Gastrocnemius medialis (tissue), 4 donors: ENCODE measurements at regions of chr1 and their contacts with region 1.

Region 1: DNA sequence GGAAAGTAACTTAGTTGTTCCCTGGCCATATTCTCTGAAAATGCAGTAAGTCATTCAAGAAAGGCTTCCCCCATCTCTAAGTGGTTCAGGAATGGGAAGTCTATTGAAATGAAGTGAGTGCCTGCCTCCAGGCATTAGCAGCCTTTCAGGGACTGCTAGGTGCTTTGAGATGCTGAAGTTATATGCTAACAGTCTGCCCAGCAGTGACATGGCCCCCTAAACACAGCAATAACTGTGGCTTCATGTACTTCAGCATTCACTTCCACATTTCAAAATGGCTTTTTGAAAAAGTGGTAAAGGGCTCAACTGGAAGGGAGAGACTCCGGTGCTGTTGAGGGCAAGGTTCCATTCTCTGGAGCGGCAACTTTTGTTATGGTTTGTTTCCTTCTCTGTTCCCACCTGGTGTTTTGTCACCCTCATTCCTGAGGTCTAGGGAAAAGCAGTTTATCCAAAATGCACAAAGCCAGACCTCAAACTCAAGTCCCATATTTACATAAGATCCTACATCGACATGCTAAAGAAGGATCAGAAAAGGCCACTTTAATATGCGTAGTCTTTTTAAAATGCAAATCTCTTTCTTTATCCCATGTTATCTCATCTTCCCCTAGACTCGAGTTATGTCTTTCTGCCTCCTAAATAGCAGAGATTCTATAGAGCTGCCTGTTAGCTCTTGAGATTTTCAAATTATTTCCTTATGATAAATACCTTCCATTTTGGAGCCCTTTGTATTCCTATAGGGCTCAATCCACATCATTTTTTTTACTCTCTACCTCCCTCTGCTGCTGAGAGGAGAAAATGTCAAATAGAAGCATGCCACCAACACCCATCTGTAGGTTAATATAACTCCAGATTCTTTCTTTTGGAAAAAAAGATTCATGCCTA is 34.2 kb upstream of the LRRC8C start:
- DNase-seq: no peak
- ATAC-seq: peak; percentile 77 to 84
- H3K4me3 ChIP-seq: no peak overlapping the region
- H3K27ac ChIP-seq: no peak overlapping the region
- H3K4me1 ChIP-seq: peaks cover 3 to 10% of the 10 kb centered on the region in 2 donors
- H3K27me3 ChIP-seq: no peaks in the 10 kb centered on the region
- CTCF ChIP-seq: peak; percentile 60 to 70 (median 69)
- POLR2A ChIP-seq: no peak

Region 2: GRCh38 chr1:89125913-89126580 is 472.6 kb before region 1 on chr1 and contains the start of gene GBP2:
- in situ Hi-C with region 1: no loop called
- intact Hi-C with region 1: no loop called
- DNase-seq: no peak
- ATAC-seq: peak; percentile 90 to 93
- H3K4me3 ChIP-seq: peak within 1 kb of the TSS; percentile 61 to 67 (median 62)
- H3K27ac ChIP-seq: peak within 1 kb of the TSS; percentile 78 to 91 (median 85)
- H3K4me1 ChIP-seq: peaks cover 15 to 42% of the 10 kb centered on the region in 2 donors
- H3K27me3 ChIP-seq: no peaks in the 10 kb centered on the region
- CTCF ChIP-seq: no peak
- POLR2A ChIP-seq: peak; percentile 42 to 70
- total RNA-seq, gene GBP2: 28.6 to 115 (median 56.2) TPM

Region 3: DNA sequence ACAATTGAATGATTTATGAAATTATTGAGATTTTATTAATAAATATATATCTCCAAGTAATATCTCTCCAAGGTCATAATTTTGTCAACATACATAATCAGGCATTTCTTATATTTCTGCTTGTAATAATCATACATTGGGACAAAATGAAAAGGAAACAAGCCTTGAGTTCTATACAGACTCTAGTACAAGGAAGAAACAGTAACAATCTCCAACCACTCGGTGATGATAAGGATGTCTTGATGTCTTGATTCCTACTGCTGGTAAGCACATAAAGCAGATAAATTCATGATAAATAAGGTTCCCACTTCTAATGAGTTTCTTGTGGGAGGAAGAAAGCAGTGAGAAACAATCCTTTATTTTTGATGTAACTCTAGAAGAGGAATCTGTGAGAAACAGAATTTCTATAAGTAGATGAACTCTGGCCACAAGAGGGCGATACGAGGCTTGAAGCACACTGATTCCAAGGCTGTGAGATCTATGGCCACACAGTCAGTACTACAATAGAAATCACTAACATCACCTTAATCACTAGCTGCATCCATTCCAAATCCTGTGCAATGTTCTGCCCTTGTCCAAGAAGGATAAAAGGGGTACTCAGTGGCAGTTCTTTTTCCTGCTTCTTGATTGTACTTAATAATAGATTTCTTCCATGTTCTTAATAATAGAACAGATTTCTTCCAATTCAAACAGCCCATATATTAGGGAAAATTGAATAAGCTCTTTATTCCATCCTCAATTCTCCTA is 115.5 kb before region 1 on chr1:
- in situ Hi-C with region 1: loop called (anchors 5 to 10 kb)
- intact Hi-C with region 1: loop called (anchors 1 kb)
- DNase-seq: peak; percentile 61
- ATAC-seq: peak; percentile 86 to 93
- H3K4me3 ChIP-seq: no peak overlapping the region
- H3K27ac ChIP-seq: no peak overlapping the region
- H3K4me1 ChIP-seq: no peaks in the 10 kb centered on the region
- H3K27me3 ChIP-seq: no peaks in the 10 kb centered on the region
- CTCF ChIP-seq: peak; percentile 52 to 80 (median 67)
- POLR2A ChIP-seq: no peak

Region 4: GRCh38 chr1:89489047-89489729 is 109.5 kb before region 1 on chr1:
- in situ Hi-C with region 1: loop called in 3 of 4 experiments (anchors 5 to 10 kb)
- intact Hi-C with region 1: no loop called
- DNase-seq: no peak
- ATAC-seq: no peak
- H3K4me3 ChIP-seq: no peak overlapping the region
- H3K27ac ChIP-seq: no peak overlapping the region
- H3K4me1 ChIP-seq: no peaks in the 10 kb centered on the region
- H3K27me3 ChIP-seq: no peaks in the 10 kb centered on the region
- CTCF ChIP-seq: no peak
- POLR2A ChIP-seq: no peak